Activated CD8-positive, alpha-beta T cell treated with anti-CD3 and anti-CD28 coated beads for 36 hours (primary cell): ENCODE measurements at regions of chr16 and their contacts with region 1.

Region 1: DNA sequence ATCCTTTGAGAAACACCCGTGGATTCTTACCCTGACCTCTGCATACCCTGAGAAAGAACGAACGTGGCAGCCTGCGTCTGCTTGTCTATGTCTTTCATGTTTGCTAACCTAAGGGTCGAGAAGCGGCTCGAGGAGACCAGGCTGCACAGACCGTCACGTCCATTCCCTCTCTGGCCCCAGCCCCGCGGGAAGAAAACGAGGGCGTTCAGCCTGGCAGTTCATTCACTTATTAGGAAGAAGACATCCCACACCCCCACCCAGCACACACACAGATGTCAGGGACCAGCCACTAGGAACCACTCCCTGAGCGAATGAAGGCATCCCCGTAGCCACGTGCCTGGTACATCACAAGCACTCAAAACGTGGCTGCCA is 655 bp upstream of the MTHFSD start:
- DNase-seq: no peak
- ATAC-seq: no peak
- H3K4me3 Mint-ChIP-seq: peak overlapping the region; percentile 81
- H3K27ac Mint-ChIP-seq: peak overlapping the region; percentile 96
- H3K4me1 Mint-ChIP-seq: peaks cover 12% of the 10 kb centered on the region
- H3K27me3 Mint-ChIP-seq: peaks cover 9% of the 10 kb centered on the region
- CTCF ChIP-seq: no peak

Region 2: DNA sequence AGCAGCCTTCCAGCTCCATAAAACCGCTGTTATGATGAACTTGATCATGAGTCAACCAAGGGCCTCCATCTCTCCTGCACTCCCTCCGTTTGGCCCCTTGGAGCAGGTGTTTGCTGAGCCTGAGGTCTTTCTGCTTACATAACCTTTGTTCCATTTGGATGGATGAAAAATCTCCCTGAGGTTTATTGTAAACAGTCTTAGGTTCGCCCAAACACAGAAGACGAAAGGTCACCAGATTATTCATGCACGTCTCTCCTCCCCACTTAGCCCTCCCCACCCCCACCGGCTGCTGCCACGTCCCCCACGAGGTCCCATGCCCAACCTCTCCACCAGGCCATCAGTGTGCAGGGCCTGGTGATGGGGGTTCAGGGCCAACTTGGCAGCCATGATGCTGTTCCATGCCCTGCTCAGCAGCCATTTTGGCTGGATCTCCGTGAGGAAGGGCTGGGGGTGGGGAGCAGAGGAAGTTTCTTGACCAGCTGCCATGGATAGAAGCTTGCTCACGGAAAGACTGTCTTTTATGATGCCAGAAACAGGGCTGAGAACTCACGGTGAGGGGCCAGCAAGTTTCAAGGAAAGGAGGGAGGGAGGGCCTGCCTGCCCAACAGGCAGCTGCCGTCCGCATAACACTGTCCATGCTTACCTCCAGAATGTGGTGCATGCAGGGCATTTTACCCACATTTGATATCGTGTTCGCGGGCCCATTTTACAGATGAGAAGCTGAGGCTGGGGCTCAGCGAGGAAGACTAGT is 93.2 kb before region 1 on chr16:
- CTCF ChIA-PET with region 1: no interaction called
- POLR2A ChIA-PET with region 1: no interaction called
- intact Hi-C with region 1: no loop called
- DNase-seq: no peak
- ATAC-seq: no peak
- H3K4me3 Mint-ChIP-seq: no peak overlapping the region
- H3K27ac Mint-ChIP-seq: no peak overlapping the region
- H3K4me1 Mint-ChIP-seq: no peaks in the 10 kb centered on the region
- H3K27me3 Mint-ChIP-seq: peaks cover 16% of the 10 kb centered on the region
- CTCF ChIP-seq: no peak

Region 3: GRCh38 chr16:86531191-86531545 is 24.5 kb before region 1 on chr16:
- CTCF ChIA-PET with region 1: no interaction called
- POLR2A ChIA-PET with region 1: no interaction called
- intact Hi-C with region 1: no loop called
- DNase-seq: no peak
- ATAC-seq: no peak
- H3K4me3 Mint-ChIP-seq: no peak overlapping the region
- H3K27ac Mint-ChIP-seq: no peak overlapping the region
- H3K4me1 Mint-ChIP-seq: no peaks in the 10 kb centered on the region
- H3K27me3 Mint-ChIP-seq: no peaks in the 10 kb centered on the region
- CTCF ChIP-seq: no peak

Region 4: GRCh38 chr16:86697715-86698114 is 142.0 kb after region 1 on chr16:
- CTCF ChIA-PET with region 1: no interaction called
- POLR2A ChIA-PET with region 1: no interaction called
- intact Hi-C with region 1: no loop called
- DNase-seq: no peak
- ATAC-seq: no peak
- H3K4me3 Mint-ChIP-seq: no peak overlapping the region
- H3K27ac Mint-ChIP-seq: no peak overlapping the region
- H3K4me1 Mint-ChIP-seq: no peaks in the 10 kb centered on the region
- H3K27me3 Mint-ChIP-seq: peaks cover 6% of the 10 kb centered on the region
- CTCF ChIP-seq: no peak

Region 5: DNA sequence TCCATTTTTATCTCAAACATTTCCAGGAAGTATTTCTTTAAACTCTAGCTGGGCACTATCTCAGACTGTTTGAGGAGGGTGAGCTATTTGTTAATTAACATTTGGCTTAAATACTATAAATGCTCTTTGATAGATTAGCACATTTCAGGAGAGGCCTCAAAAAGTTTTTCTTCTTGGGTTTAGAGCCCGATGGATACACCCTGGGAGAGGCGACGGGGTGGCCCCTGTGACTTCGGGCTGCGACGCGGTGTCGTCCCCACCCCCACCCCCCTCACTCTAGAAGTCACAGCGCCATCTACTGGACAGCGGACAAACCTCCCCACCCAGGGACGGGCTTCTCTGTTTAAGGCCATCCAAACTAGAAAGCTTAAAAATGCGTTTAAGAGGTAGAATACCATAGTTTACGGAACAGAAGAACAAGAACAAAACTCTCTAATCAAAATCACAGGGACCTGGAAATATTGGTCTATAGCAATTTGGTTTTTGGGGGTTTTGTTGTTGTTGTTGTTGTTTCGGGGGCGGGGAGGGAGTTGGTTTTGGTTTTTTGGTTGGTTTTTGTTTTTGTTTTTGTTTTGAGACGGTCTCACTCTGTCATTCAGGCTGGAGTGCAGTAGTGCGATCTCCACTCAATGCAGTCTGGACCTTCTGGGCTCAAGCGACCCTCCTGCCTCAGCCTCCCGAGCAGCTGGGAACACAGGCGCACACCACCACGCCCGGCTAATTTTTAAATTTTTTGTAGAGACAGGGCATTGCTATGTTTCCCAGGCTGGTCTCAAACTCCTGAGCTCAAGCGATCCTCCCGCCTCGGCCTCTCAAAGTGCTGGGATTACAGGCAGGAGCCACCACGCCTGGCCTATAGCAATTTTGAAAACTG is 507.1 kb after region 1 on chr16:
- CTCF ChIA-PET with region 1: interaction called, 16 read pairs
- POLR2A ChIA-PET with region 1: no interaction called
- intact Hi-C with region 1: loop called (anchors 5 kb)
- DNase-seq: peak; percentile 77
- ATAC-seq: peak; percentile 62
- H3K4me3 Mint-ChIP-seq: no peak overlapping the region
- H3K27ac Mint-ChIP-seq: no peak overlapping the region
- H3K4me1 Mint-ChIP-seq: no peaks in the 10 kb centered on the region
- H3K27me3 Mint-ChIP-seq: peaks cover 38% of the 10 kb centered on the region
- CTCF ChIP-seq: peak; percentile 78